ENCODE measurements at regions of chr20 and their contacts with region 1.

Region 1: GRCh38 chr20:38434743-38435554 is at the start of gene SNHG17:
- DNase-seq: peak; percentile 88
- ATAC-seq: peak; percentile 83 to 94 (median 90)
- H3K4me3 ChIP-seq: peak within 1 kb of the TSS; percentile 42 to 83 (median 75)
- H3K27ac ChIP-seq: peak within 1 kb of the TSS in 9 of 10 donors; percentile 44 to 90 (median 81)
- H3K4me1 ChIP-seq: peaks cover 6 to 34% (median 18%) of the 10 kb centered on the region in 9 donors
- H3K27me3 ChIP-seq: no peaks in the 10 kb centered on the region
- CTCF ChIP-seq: peak; percentile 98 to 100 (median 99)
- total RNA-seq, gene SNHG17: 4.2 to 25.9 (median 6.3) TPM

Region 2: DNA sequence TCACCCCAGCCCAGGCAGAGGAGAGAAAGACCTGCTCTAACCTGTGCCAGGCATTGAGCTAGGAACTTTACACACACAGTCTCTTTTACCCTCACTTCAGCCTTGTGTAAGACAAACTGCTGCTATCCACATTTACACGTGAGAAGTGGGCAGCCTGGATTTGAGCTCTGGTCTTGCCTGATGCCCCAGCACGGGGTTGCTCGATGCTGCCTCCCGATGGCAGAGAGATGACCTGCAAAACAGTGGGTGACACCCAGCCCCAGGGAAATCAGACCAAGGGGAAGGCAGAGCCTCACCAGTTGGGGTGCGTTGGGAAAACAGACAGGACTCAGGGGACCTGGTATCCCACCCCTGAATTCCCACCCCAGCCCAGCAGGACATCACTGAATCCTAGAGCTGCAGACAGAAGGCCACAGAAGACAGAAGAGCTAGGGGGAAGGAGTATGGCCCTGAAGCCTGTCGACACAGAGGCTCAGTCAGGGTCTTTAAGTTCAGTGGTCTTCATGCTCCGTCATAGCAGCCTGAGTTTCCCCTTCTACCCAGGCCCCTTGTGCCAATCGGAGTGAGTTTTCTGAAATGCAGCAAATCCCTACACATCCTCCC is 130.0 kb before region 1 on chr20:
- intact Hi-C with region 1: no loop called
- DNase-seq: no peak
- ATAC-seq: peak in 1 of 8 donors; percentile 59
- H3K4me3 ChIP-seq: peak overlapping the region in 1 of 10 donors; percentile 9
- H3K27ac ChIP-seq: no peak overlapping the region
- H3K4me1 ChIP-seq: peaks cover 0 to 37% (median 0%) of the 10 kb centered on the region in 9 donors
- H3K27me3 ChIP-seq: peaks cover 0 to 54% (median 11%) of the 10 kb centered on the region in 7 donors
- CTCF ChIP-seq: peak in 7 of 9 donors; percentile 18 to 51 (median 35)

Region 3: GRCh38 chr20:38446441-38447209 is 11.7 kb after region 1 on chr20:
- intact Hi-C with region 1: loop called in 3 of 10 experiments (anchors 1 kb)
- DNase-seq: peak; percentile 93 to 94
- ATAC-seq: peak; percentile 92 to 96 (median 95)
- H3K4me3 ChIP-seq: peak overlapping the region; percentile 63 to 97 (median 79)
- H3K27ac ChIP-seq: peak overlapping the region; percentile 36 to 95 (median 86)
- H3K4me1 ChIP-seq: peaks cover 3 to 34% (median 14%) of the 10 kb centered on the region in 9 donors
- H3K27me3 ChIP-seq: no peaks in the 10 kb centered on the region
- CTCF ChIP-seq: peak; percentile 89 to 98 (median 95)

Region 4: DNA sequence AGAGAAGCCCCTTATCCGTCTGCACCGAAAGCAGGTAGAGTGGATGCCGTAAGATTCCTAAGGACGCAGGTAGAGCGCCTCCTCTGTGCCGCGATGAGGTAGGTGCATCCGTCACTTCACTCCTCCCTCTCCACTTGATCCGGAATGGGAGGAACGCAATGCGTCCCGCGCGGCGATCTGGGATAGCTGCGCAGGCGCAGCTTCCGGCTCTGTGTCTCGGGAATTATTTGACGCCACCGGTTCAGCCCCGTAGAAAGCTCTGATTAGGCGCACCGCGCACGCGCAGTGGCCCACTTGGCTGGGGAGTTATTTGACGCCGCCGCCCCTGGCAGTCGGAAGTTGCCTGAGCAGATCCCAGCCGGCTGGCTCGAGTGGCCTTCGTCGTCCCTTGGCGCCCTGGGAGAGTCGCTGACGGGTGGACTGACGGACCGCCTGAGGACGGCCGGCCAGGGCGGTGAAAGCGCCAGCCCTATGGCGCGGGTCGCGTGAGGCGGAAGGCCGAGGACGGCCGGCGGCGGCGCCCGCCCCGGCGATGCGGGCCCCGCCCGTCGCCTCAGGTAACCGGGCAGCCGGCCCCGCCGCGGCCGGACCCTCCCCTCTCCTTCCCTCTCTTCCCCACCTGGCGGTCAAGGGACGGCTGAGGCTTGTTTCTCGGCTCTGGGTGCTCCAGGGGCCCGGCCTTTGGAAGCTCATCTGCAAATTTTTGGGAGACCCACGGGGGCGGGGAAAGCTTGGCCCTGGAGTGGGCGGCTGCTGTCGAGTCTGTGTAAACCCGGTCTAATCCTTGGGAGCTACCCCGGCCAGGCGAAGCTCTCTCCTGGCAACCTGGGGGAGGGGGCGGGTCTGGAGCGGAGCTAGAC is 37.8 kb after region 1 on chr20 and contains the start of gene RALGAPB:
- intact Hi-C with region 1: loop called in 1 of 10 experiments (anchors 2 kb)
- DNase-seq: peak; percentile 99 to 100
- ATAC-seq: peak; percentile 96 to 100 (median 98)
- H3K4me3 ChIP-seq: peak within 1 kb of the TSS; percentile 73 to 92 (median 86)
- H3K27ac ChIP-seq: peak within 1 kb of the TSS; percentile 63 to 96 (median 92)
- H3K4me1 ChIP-seq: peaks cover 3 to 40% (median 24%) of the 10 kb centered on the region in 9 donors
- H3K27me3 ChIP-seq: no peaks in the 10 kb centered on the region
- CTCF ChIP-seq: peak in 6 of 9 donors; percentile 8 to 65 (median 52)
- total RNA-seq, gene RALGAPB: 21.6 to 28.2 (median 26.5) TPM

Measured in heart right ventricle (tissue), 16 donors.